Mammary epithelial cell (primary cell): ENCODE measurements at regions of chr11 and their contacts with region 1.

Region 1: DNA sequence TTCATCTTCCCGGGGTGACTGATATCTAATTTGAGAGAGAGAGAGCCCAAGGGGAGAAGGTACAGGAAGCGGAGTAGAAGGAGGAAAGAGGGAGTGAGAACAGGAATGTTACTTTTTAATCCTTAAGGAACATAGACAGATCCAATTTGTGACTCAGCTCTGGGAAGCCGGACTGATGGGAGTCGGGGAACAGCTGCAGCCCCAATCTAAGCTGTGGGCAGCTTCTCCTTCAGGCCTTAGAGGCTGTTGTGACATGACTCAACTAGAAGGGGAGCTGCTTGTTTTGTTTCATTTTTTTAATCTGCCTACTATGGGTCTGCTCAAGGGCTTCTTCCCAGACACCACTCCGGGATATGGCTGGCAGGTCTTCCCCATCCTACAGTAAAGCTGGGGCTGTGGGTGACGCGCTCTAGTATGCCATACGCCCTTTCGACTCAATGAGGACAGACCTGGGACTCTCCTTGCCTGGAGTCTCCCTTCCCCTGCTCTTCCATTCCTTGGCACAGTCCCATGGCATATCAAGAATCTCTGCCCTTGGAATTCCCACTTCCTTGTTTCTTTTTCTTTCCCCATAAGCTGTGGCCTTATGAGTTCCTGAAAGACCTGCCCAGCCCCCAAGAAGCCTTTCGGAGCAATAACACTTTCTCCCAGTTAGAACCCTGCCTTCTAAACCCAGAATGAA is 103.3 kb upstream of the AKIP1 start:
- DNase-seq: peak; percentile 69
- H3K4me3 ChIP-seq: peak overlapping the region; percentile 72 to 80 (median 78)
- H3K27ac ChIP-seq: peak overlapping the region; percentile 95
- H3K4me1 ChIP-seq: peaks cover 38% of the 10 kb centered on the region
- H3K27me3 ChIP-seq: no peaks in the 10 kb centered on the region
- CTCF ChIP-seq: no peak

Region 2: DNA sequence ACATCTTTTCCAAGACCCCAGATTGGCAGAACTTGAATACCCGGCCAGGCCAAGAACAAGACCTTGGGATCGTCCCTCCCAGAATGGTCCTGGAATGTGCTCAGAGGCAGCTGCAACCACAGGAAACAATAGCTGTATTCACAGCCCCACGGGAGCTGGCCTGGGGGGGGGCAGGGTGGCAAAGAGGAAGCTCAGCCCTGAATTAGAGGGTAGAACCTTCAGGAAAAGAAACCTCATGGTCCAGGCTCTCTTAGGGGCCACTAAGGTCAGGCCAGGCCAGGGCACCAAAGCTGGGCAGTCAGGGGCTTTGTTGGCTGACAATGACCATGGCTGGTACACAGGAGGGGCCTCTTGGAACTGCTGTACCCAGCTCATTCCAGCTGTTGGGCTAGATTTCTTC is 107.8 kb before region 1 on chr11:
- CTCF ChIA-PET with region 1: no interaction called
- dilution Hi-C with region 1: no loop called
- in situ Hi-C with region 1: loop called in 1 of 2 experiments (anchors 10 kb)
- intact Hi-C with region 1: no loop called
- DNase-seq: peak; percentile 74
- H3K4me3 ChIP-seq: no peak overlapping the region
- H3K27ac ChIP-seq: peak overlapping the region; percentile 77
- H3K4me1 ChIP-seq: peaks cover 18% of the 10 kb centered on the region
- H3K27me3 ChIP-seq: no peaks in the 10 kb centered on the region
- CTCF ChIP-seq: no peak

Region 3: DNA sequence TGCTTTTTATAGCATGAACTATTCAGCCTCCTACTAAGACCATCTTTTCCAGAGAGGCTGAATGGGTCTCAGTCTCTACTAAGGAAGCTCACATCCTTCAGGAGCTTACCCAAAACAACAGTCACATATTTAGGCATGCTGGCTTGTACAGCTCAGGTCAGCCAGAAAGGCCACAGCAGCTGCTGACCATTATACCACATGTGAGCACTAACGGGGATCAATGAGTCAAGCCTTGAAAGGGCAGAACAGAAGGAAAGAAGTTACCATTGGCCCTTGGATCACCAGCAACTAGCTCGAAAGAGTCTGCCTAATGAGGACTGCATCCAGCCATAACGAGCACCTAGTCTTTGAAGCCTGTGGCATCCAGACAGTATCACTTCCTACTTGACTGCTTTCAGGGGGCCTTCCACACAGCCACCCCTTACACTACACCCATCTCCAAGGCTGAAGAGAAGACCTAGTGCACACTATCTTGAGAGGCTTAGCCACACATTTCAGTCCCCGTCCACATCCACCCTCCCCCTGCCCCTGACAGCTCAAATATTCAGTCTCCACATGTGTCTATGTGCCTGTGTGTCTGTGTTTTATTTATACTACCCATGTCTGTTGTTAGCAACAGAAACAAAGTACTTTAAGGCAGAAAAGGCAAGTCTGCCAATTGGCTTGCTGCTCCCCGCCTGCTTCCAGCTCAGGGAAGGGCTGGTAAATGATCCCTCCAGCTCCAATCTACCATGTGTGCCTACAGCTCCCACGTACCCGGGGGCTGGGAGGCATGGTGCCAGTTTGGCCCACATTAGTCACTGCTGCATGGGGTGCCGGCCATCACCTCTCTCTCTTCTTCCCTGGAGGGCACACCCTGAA is 29.5 kb before region 1 on chr11:
- CTCF ChIA-PET with region 1: no interaction called
- dilution Hi-C with region 1: no loop called
- in situ Hi-C with region 1: no loop called
- intact Hi-C with region 1: no loop called
- DNase-seq: no peak
- H3K4me3 ChIP-seq: no peak overlapping the region
- H3K27ac ChIP-seq: peak overlapping the region; percentile 36
- H3K4me1 ChIP-seq: peaks cover 50% of the 10 kb centered on the region
- H3K27me3 ChIP-seq: no peaks in the 10 kb centered on the region
- CTCF ChIP-seq: no peak